Panc1 (cell line): ENCODE measurements at regions of chr15 and their contacts with region 1.

Region 1: GRCh38 chr15:101008158-101009139 is 89.3 kb downstream of the LRRK1 start:
- DNase-seq: peak; percentile 67
- ATAC-seq: peak; percentile 85
- H3K4me3 ChIP-seq: peak overlapping the region; percentile 34 to 62
- H3K27ac ChIP-seq: peak overlapping the region; percentile 96
- H3K4me1 ChIP-seq: peaks cover 24% of the 10 kb centered on the region
- H3K27me3 ChIP-seq: no peaks in the 10 kb centered on the region
- CTCF ChIP-seq: peak; percentile 99

Region 2: DNA sequence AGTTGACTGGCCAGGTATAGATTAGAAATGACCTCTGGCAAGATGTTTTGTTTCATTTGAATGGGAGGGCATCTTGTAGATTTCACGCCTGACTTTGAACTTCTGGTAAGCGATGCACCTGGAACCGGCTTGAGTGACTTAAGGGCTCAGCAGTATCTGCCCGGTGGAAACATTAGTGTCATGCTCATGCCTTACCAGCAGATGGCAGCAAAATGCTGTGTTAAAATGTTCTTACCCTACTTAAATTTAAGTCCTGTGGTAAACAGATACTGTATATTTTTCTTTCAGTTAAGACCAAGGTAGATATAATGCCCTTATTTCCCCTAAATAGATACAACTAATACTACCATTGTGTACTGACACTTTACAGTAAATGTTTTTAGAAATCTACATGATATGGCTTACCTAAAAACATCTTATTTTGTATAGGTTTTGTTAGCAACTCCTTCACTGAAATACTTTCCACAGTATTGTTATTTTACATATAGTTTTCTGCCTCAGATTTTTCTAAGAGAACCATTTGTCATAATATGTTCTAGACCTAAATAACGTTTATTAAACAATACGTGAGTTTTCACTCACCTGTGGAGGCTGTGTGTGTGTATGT is 380.6 kb before region 1 on chr15:
- CTCF ChIA-PET with region 1: no interaction called
- POLR2A ChIA-PET with region 1: no interaction called
- in situ Hi-C with region 1: no loop called
- intact Hi-C with region 1: loop called (anchors 5 kb)
- DNase-seq: peak; percentile 75
- ATAC-seq: peak; percentile 95
- H3K4me3 ChIP-seq: no peak overlapping the region
- H3K27ac ChIP-seq: peak overlapping the region; percentile 41; the same call in 1 of the 2 replicates
- H3K4me1 ChIP-seq: no peaks in the 10 kb centered on the region; the same call in 1 of the 2 replicates
- H3K27me3 ChIP-seq: no peaks in the 10 kb centered on the region
- CTCF ChIP-seq: peak; percentile 87

Region 3: GRCh38 chr15:100905850-100906249 is 102.6 kb before region 1 on chr15:
- CTCF ChIA-PET with region 1: interaction called, 12 read pairs
- POLR2A ChIA-PET with region 1: no interaction called
- in situ Hi-C with region 1: no loop called
- intact Hi-C with region 1: no loop called
- DNase-seq: no peak
- ATAC-seq: no peak
- H3K4me3 ChIP-seq: no peak overlapping the region
- H3K27ac ChIP-seq: peak overlapping the region; percentile 31; the same call in 1 of the 2 replicates
- H3K4me1 ChIP-seq: no peaks in the 10 kb centered on the region
- H3K27me3 ChIP-seq: no peaks in the 10 kb centered on the region
- CTCF ChIP-seq: no peak

Region 4: GRCh38 chr15:100918034-100918689 is 90.3 kb before region 1 on chr15:
- CTCF ChIA-PET with region 1: interaction called, 48 read pairs
- POLR2A ChIA-PET with region 1: interaction called, 3 read pairs
- in situ Hi-C with region 1: no loop called
- intact Hi-C with region 1: loop called (anchors 1 kb)
- DNase-seq: peak; percentile 55
- ATAC-seq: peak; percentile 86
- H3K4me3 ChIP-seq: peak overlapping the region; percentile 69 to 77
- H3K27ac ChIP-seq: peak overlapping the region; percentile 99
- H3K4me1 ChIP-seq: peaks cover 42% of the 10 kb centered on the region
- H3K27me3 ChIP-seq: no peaks in the 10 kb centered on the region
- CTCF ChIP-seq: peak; percentile 98

Region 5: GRCh38 chr15:100940767-100941379 is 67.6 kb before region 1 on chr15:
- CTCF ChIA-PET with region 1: interaction called, 15 read pairs
- POLR2A ChIA-PET with region 1: no interaction called
- in situ Hi-C with region 1: no loop called
- intact Hi-C with region 1: no loop called
- DNase-seq: no peak
- ATAC-seq: 0 out of 2 replicates have a peak, but pooled peaks have one; percentile 18
- H3K4me3 ChIP-seq: no peak overlapping the region
- H3K27ac ChIP-seq: peak overlapping the region; percentile 86
- H3K4me1 ChIP-seq: peaks cover 47% of the 10 kb centered on the region
- H3K27me3 ChIP-seq: no peaks in the 10 kb centered on the region
- CTCF ChIP-seq: no peak

Region 6: GRCh38 chr15:100958326-100959065 is 50.0 kb before region 1 on chr15:
- CTCF ChIA-PET with region 1: interaction called, 6 read pairs
- POLR2A ChIA-PET with region 1: interaction called, 3 read pairs
- in situ Hi-C with region 1: no loop called
- intact Hi-C with region 1: loop called (anchors 2 kb)
- DNase-seq: peak; percentile 42
- ATAC-seq: peak; percentile 88
- H3K4me3 ChIP-seq: peak overlapping the region; percentile 18 to 40; a peak in 3 of 4 replicates
- H3K27ac ChIP-seq: peak overlapping the region; percentile 100
- H3K4me1 ChIP-seq: peaks cover 63% of the 10 kb centered on the region
- H3K27me3 ChIP-seq: no peaks in the 10 kb centered on the region
- CTCF ChIP-seq: no peak

Region 7: DNA sequence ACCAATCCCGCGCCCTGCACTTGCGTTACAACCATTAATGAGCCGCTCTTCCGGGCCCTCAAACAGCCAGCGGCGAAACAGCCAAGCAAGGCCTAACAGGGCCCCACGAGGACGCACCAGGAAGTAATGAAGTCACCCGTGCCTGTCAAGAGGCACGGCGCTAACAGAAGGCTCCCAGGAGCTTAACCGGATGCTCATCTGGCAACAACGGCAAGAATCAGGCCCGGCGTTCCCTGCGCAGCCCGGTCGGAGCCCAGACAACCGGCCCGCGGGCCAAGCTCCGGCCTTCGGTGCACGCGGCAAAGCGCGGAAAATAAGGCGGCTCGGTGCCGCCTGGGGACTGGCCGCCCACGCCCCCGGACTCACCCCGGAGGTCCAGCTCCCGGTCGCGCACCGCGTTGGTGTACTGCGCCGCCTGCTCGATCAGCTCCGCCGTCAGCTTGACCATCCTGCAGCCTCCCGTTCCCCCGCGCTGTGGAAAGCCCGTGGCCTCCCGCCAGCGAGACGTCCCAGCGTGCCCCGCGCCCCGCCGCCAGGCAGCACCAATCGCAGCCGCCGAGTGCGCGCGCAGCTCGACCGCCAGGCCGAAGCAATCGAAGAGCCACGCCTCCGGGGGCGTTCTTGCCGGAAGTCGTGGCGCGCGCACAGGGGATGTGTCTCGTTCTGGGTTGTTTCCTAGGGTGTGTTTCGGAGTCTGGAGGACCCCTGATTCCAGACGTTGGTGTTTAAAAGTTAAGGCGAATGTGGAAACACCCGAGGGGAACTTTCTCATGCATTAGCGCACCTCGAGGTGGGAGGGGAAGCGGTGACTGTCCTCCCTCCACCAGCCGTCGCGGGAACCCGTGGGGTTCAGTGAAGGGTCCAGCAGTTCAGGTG is 286.5 kb after region 1 on chr15 and contains the start of gene SNRPA1:
- CTCF ChIA-PET with region 1: no interaction called
- POLR2A ChIA-PET with region 1: no interaction called
- in situ Hi-C with region 1: no loop called
- intact Hi-C with region 1: no loop called
- DNase-seq: no peak
- ATAC-seq: peak; percentile 92
- H3K4me3 ChIP-seq: peak within 1 kb of the TSS; percentile 89 to 90
- H3K27ac ChIP-seq: peak within 1 kb of the TSS; percentile 97
- H3K4me1 ChIP-seq: peaks cover 25% of the 10 kb centered on the region
- H3K27me3 ChIP-seq: no peaks in the 10 kb centered on the region
- CTCF ChIP-seq: no peak
- total RNA-seq, gene SNRPA1: 98.0 TPM